Activated CD8-positive, alpha-beta T cell treated with anti-CD3 and anti-CD28 coated beads, Interleukin-2, amount 10 ng/mL, durations not matched to agents 7 days and 5 days (primary cell): ENCODE measurements at regions of chr6 and their contacts with region 1.

Region 1: GRCh38 chr6:44304282-44305199 is 8.6 kb downstream of the AARS2 start:
- DNase-seq: peak; percentile 48
- ATAC-seq: peak; percentile 55
- H3K4me3 Mint-ChIP-seq: no peak overlapping the region
- H3K27ac Mint-ChIP-seq: no peak overlapping the region
- H3K4me1 Mint-ChIP-seq: peaks cover 5% of the 10 kb centered on the region
- H3K27me3 Mint-ChIP-seq: no peaks in the 10 kb centered on the region

Region 2: DNA sequence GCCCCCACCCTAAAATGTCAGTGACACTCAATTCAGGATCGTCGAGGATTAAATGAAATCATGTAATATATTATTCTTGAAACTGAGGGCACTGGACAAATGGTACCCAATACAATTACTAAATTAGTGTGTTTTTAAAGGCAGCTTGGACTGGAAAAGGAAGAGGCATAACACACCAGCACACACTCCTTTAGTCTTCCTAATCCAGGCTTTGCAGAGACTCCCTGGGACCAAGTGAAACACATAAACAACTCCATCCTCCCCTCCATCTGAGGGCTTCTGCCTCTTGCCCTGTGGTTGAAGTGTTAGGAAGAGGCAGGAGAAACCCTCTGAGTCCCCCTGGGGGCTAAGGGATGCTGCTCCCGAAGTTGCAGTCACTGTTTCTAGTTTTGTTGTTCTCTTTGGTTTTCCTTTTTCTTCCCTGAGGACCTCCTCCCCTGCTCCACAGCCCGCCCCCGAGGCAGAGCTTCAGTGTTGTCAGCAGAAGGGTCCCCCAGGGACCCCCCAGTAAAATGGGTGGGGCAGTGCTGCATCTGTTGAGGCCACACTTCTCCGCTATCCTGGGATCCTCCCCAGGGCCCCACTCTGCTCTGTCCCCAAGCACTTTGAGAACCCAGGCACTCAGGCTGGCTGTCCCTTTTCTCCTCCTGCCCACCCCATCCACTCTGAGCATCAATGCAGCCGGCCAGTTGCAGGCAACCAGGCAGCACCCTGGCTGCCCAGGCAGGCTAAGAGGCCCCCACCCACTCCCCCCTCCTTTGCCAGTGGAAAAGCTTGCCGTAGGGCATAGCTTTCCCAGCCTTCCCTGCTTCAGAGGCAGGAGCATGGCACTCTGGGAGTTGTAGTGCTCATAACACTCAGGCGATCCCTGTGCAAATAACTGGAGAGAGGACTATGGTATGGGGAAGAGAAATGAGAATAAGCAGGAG is 171.3 kb before region 1 on chr6:
- CTCF ChIA-PET with region 1: no interaction called
- POLR2A ChIA-PET with region 1: no interaction called
- DNase-seq: no peak
- ATAC-seq: no peak
- H3K4me3 Mint-ChIP-seq: no peak overlapping the region
- H3K27ac Mint-ChIP-seq: no peak overlapping the region
- H3K4me1 Mint-ChIP-seq: peaks cover 14% of the 10 kb centered on the region
- H3K27me3 Mint-ChIP-seq: peaks cover 2% of the 10 kb centered on the region

Region 3: GRCh38 chr6:44217332-44218143 is 87.0 kb before region 1 on chr6:
- CTCF ChIA-PET with region 1: no interaction called
- POLR2A ChIA-PET with region 1: no interaction called
- DNase-seq: no peak
- ATAC-seq: no peak
- H3K4me3 Mint-ChIP-seq: no peak overlapping the region
- H3K27ac Mint-ChIP-seq: no peak overlapping the region
- H3K4me1 Mint-ChIP-seq: peaks cover 27% of the 10 kb centered on the region
- H3K27me3 Mint-ChIP-seq: peaks cover 14% of the 10 kb centered on the region

Region 4: GRCh38 chr6:44289726-44290260 is 14.7 kb before region 1 on chr6:
- CTCF ChIA-PET with region 1: interaction called, 22 read pairs
- POLR2A ChIA-PET with region 1: interaction called, 4 read pairs
- DNase-seq: no peak
- ATAC-seq: no peak
- H3K4me3 Mint-ChIP-seq: no peak overlapping the region
- H3K27ac Mint-ChIP-seq: no peak overlapping the region
- H3K4me1 Mint-ChIP-seq: no peaks in the 10 kb centered on the region
- H3K27me3 Mint-ChIP-seq: peaks cover 46% of the 10 kb centered on the region

Region 5: GRCh38 chr6:44321210-44321609 is 16.7 kb after region 1 on chr6:
- CTCF ChIA-PET with region 1: interaction called, 12 read pairs
- POLR2A ChIA-PET with region 1: no interaction called
- DNase-seq: no peak
- ATAC-seq: no peak
- H3K4me3 Mint-ChIP-seq: no peak overlapping the region
- H3K27ac Mint-ChIP-seq: no peak overlapping the region
- H3K4me1 Mint-ChIP-seq: no peaks in the 10 kb centered on the region
- H3K27me3 Mint-ChIP-seq: peaks cover 24% of the 10 kb centered on the region

Region 6: DNA sequence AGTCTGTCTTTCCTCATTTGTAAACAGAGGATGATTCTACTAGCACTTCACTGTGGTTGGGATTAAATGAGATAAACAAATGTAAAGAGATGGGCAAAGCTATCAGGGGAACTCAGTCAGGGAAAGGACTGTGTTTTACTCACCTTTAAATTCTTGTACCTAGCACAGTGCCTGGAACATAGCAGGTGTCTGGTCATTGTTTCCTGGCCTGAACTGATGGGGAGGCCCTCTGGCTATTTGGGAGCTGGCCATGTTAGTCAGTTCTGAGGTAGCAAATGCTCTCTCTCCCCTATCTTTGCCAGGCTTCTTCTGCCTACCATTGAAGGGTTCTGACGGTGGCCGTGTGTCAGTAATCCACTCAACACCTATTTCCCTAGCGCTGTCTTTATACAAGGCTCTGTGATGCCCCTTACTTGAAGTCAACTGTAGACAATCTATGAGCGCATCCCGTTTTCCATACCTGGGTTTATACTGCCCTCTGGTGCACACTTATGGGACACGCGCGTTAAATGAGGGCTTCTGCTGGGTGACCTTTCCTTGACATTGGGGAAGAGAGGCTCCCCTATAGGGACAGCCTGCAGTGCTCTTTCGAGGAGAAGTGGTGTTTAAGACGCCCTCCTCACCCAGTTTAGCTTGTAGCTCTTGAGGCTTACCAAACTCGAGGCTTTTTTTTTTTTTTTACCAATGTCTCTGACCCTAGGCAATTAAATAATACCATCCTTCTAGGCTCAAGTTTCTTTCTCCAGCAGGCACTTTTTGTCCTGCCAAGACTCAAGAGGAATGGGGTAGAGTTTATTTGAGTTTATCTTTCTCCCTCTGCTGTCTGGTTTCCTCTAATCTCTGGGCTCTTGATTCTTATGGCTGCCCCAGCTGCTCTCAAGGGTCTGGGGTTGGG is 33.9 kb after region 1 on chr6:
- CTCF ChIA-PET with region 1: interaction called, 12 read pairs
- POLR2A ChIA-PET with region 1: no interaction called
- DNase-seq: peak; percentile 80
- ATAC-seq: peak; percentile 91
- H3K4me3 Mint-ChIP-seq: no peak overlapping the region
- H3K27ac Mint-ChIP-seq: no peak overlapping the region
- H3K4me1 Mint-ChIP-seq: peaks cover 2% of the 10 kb centered on the region
- H3K27me3 Mint-ChIP-seq: peaks cover 26% of the 10 kb centered on the region